Psoas muscle (tissue), 8 donors: ENCODE measurements at regions of chr2 and their contacts with region 1.

Region 1: GRCh38 chr2:42513257-42513918 is 19.6 kb upstream of the KCNG3 start:
- DNase-seq: no peak
- ATAC-seq: peak in 2 of 4 donors; percentile 48 to 55
- H3K4me3 ChIP-seq: no peak overlapping the region
- H3K27ac ChIP-seq: no peak overlapping the region
- H3K4me1 ChIP-seq: no peaks in the 10 kb centered on the region
- H3K27me3 ChIP-seq: no peaks in the 10 kb centered on the region
- CTCF ChIP-seq: peak; percentile 50

Region 2: DNA sequence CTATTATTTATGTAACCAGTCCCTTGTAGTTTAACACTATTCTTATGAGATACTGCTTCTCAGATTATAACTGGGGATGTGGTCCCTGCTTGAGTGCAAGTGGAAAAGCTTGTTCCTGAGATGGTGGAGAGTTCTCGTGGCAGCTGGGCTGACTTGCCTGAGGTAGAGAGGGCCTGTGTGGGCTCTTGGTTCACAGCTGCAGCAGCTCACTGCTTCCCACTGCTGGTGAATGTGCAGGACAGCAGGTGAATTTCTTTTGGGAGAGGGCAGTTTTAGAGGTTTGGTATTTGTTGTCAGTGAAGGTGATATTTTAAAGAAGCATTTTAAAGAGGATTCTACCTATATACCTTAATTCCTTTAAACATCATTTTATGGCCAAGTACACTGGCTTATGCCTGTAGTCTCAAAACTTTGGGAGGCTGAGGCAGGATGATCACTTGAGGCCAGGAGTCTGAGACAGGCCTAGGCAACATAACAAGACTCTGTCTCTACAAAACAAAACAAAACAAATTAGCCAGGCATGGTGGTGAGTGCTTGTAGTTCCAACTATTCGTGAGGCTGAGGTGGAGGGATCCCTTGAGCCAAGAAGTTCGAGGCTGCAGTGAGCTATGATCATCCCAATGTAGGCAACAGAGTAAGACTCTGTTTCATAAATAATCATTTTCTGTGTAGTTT is 149.9 kb after region 1 on chr2:
- intact Hi-C with region 1: loop called (anchors 5 kb)
- DNase-seq: peak; percentile 47 to 76
- ATAC-seq: peak; percentile 71 to 93 (median 88)
- H3K4me3 ChIP-seq: no peak overlapping the region
- H3K27ac ChIP-seq: no peak overlapping the region
- H3K4me1 ChIP-seq: no peaks in the 10 kb centered on the region
- H3K27me3 ChIP-seq: no peaks in the 10 kb centered on the region
- CTCF ChIP-seq: peak; percentile 94